Naive thymus-derived CD4-positive, alpha-beta T cell (primary cell): ENCODE measurements at regions of chr2 and their contacts with region 1.

Region 1: DNA sequence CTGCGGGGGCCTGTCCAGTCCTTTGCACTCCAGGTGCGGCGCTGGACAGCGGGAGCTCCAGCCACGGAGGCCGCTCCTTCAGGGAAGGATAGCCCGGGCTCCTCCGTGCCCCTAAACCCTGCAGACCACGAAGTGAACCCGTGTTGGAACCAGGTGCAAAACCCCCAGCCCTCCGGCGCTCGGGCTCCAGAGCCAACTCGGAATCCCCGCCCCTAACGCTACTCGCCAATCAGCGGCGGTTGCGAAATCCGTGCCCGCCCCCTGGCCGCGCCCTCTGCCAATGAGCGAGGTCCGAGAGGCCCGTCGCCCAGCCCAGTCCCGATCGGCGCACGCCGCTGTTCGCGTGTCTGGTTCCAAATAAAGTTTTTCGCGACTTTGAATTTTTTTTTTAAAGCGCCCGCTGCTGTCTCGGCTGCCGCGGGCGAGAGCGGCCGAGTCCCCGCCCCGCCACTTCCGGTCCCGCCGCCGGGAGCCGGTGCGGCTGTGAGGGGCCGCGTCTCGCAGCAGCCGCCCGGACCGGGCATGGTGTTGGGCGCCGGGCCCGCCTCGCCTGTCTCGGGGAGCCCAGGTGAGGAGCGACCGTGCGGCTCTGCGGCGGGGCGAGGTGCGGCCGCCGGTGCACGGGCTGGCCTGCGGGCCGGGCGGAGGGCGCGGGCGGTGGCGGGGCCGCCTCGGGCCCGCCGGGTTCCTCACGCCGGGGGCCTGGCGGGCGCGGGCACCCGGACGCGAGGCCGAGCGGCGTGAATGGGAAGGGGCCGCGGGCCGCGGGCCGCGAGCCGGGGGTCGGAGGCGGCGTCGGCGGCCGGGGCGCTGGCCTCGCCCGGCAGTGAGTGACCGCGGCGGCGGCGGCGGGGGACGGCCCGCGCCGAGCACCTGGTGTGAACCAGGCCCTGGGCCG is at the start of gene UBE2F:
- DNase-seq: peak; percentile 93 to 98 (median 97)
- ATAC-seq: peak; percentile 97
- H3K4me3 ChIP-seq: peak within 1 kb of the TSS; percentile 96
- H3K4me3 Mint-ChIP-seq: peak within 1 kb of the TSS; percentile 84 to 93 (median 90)
- H3K27ac ChIP-seq: peak within 1 kb of the TSS; percentile 64
- H3K27ac Mint-ChIP-seq: peak within 1 kb of the TSS; percentile 82 to 95 (median 88)
- H3K4me1 ChIP-seq: peaks cover 13 to 35% of the 10 kb centered on the region in 2 donors
- H3K4me1 Mint-ChIP-seq: peaks cover 29 to 47% (median 44%) of the 10 kb centered on the region in 7 donors
- H3K27me3 ChIP-seq: no peaks in the 10 kb centered on the region
- H3K27me3 Mint-ChIP-seq: peaks cover 0 to 3% (median 0%) of the 10 kb centered on the region in 5 donors
- total RNA-seq, gene UBE2F: 42.5 to 80.9 (median 48.3) TPM

Region 2: GRCh38 chr2:237858294-237859081 is 108.3 kb before region 1 on chr2:
- CTCF ChIA-PET with region 1: interaction called, 3 read pairs
- POLR2A ChIA-PET with region 1: no interaction called
- intact Hi-C with region 1: loop called (anchors 1 kb)
- DNase-seq: peak in 7 of 9 donors; percentile 26 to 51 (median 44)
- ATAC-seq: peak; percentile 76
- H3K4me3 ChIP-seq: no peak overlapping the region
- H3K4me3 Mint-ChIP-seq: peak overlapping the region; percentile 46 to 86 (median 71)
- H3K27ac ChIP-seq: no peak overlapping the region
- H3K27ac Mint-ChIP-seq: peak overlapping the region in 2 of 9 donors; percentile 72 to 73
- H3K4me1 ChIP-seq: no peaks in the 10 kb centered on the region
- H3K4me1 Mint-ChIP-seq: peaks cover 0 to 15% (median 13%) of the 10 kb centered on the region in 7 donors
- H3K27me3 ChIP-seq: peaks cover 4 to 6% of the 10 kb centered on the region in 2 donors
- H3K27me3 Mint-ChIP-seq: peaks cover 23 to 63% (median 29%) of the 10 kb centered on the region in 5 donors

Region 3: DNA sequence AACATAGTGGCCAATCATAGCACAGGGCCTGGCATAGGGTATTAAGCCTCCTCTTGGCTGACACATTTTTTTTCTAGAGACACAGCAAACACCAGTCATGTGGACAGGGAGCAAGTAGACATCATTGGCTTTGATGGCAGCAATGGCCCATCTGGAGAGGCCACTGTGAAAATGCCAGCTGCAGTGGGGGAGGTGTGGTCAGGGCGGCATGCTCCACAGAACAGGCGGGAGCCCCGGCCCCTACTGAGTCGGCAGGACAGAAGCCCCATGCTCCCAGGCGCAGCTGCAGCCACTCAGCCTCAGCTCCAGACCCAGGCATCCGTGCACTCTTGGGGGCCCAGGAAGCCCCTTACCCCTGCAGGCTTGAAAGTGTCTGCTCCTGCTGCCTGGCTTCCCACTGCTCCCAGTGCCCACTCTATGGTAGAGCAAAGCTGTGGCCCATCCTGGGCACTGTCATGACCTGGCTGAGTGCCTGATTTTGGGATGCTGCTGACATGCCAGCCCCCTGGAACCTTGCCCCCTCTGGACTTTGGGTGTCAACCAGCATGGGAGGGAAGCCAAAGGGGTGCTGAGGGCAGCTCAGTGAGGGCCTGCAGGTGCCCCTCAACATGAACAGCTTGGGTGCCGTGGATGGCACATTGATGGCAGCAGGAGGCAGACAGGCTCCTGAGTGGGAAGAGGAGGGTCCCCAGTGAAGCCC is 23.3 kb before region 1 on chr2:
- CTCF ChIA-PET with region 1: no interaction called
- POLR2A ChIA-PET with region 1: interaction called, 7 read pairs
- intact Hi-C with region 1: loop called in 1 of 2 experiments (anchors 2 kb)
- DNase-seq: no peak
- ATAC-seq: no peak
- H3K4me3 ChIP-seq: no peak overlapping the region
- H3K4me3 Mint-ChIP-seq: peak overlapping the region in 8 of 10 donors; percentile 25 to 89 (median 62)
- H3K27ac ChIP-seq: peak overlapping the region; percentile 26
- H3K27ac Mint-ChIP-seq: peak overlapping the region; percentile 87 to 99 (median 97)
- H3K4me1 ChIP-seq: peaks cover 34 to 40% of the 10 kb centered on the region in 2 donors
- H3K4me1 Mint-ChIP-seq: peaks cover 37 to 90% (median 75%) of the 10 kb centered on the region in 7 donors
- H3K27me3 ChIP-seq: no peaks in the 10 kb centered on the region
- H3K27me3 Mint-ChIP-seq: no peaks in the 10 kb centered on the region

Region 4: GRCh38 chr2:238015705-238016104 is 48.9 kb after region 1 on chr2:
- CTCF ChIA-PET with region 1: interaction called, 3 read pairs
- POLR2A ChIA-PET with region 1: no interaction called
- intact Hi-C with region 1: loop called in 1 of 2 experiments (anchors 1 kb)
- DNase-seq: no peak
- ATAC-seq: no peak
- H3K4me3 ChIP-seq: no peak overlapping the region
- H3K4me3 Mint-ChIP-seq: no peak overlapping the region
- H3K27ac ChIP-seq: no peak overlapping the region
- H3K27ac Mint-ChIP-seq: peak overlapping the region in 2 of 9 donors; percentile 29 to 41
- H3K4me1 ChIP-seq: no peaks in the 10 kb centered on the region
- H3K4me1 Mint-ChIP-seq: peaks cover 7 to 22% (median 15%) of the 10 kb centered on the region in 7 donors
- H3K27me3 ChIP-seq: no peaks in the 10 kb centered on the region
- H3K27me3 Mint-ChIP-seq: no peaks in the 10 kb centered on the region

Region 5: GRCh38 chr2:238203094-238203972 is 236.5 kb after region 1 on chr2 and contains the start of gene ILKAP:
- CTCF ChIA-PET with region 1: no interaction called
- POLR2A ChIA-PET with region 1: interaction called, 9 read pairs
- intact Hi-C with region 1: loop called (anchors 1 kb)
- DNase-seq: peak; percentile 87 to 95 (median 92)
- ATAC-seq: peak; percentile 98
- H3K4me3 ChIP-seq: peak within 1 kb of the TSS; percentile 67
- H3K4me3 Mint-ChIP-seq: peak within 1 kb of the TSS; percentile 84 to 94 (median 88)
- H3K27ac ChIP-seq: peak within 1 kb of the TSS; percentile 91
- H3K27ac Mint-ChIP-seq: peak within 1 kb of the TSS; percentile 84 to 95 (median 92)
- H3K4me1 ChIP-seq: peaks cover 20 to 35% of the 10 kb centered on the region in 2 donors
- H3K4me1 Mint-ChIP-seq: peaks cover 28 to 55% (median 43%) of the 10 kb centered on the region in 7 donors
- H3K27me3 ChIP-seq: no peaks in the 10 kb centered on the region
- H3K27me3 Mint-ChIP-seq: peaks cover 0 to 4% (median 0%) of the 10 kb centered on the region in 5 donors
- total RNA-seq, gene ILKAP: 68.1 to 126 (median 90.9) TPM

Region 6: GRCh38 chr2:238288650-238289573 is 322.1 kb after region 1 on chr2:
- CTCF ChIA-PET with region 1: interaction called, 3 read pairs
- POLR2A ChIA-PET with region 1: interaction called, 3 read pairs
- intact Hi-C with region 1: loop called (anchors 1 to 5 kb)
- DNase-seq: peak; percentile 96 to 99 (median 98)
- ATAC-seq: peak; percentile 93
- H3K4me3 ChIP-seq: peak overlapping the region; percentile 73
- H3K4me3 Mint-ChIP-seq: peak overlapping the region; percentile 84 to 97 (median 93)
- H3K27ac ChIP-seq: peak overlapping the region; percentile 80
- H3K27ac Mint-ChIP-seq: peak overlapping the region; percentile 93 to 98 (median 97)
- H3K4me1 ChIP-seq: peaks cover 16 to 23% of the 10 kb centered on the region in 2 donors
- H3K4me1 Mint-ChIP-seq: peaks cover 26 to 56% (median 40%) of the 10 kb centered on the region in 7 donors
- H3K27me3 ChIP-seq: no peaks in the 10 kb centered on the region
- H3K27me3 Mint-ChIP-seq: peaks cover 0 to 2% (median 0%) of the 10 kb centered on the region in 5 donors